ENCODE measurements at regions of chr6 and their contacts with region 1.

Region 1: DNA sequence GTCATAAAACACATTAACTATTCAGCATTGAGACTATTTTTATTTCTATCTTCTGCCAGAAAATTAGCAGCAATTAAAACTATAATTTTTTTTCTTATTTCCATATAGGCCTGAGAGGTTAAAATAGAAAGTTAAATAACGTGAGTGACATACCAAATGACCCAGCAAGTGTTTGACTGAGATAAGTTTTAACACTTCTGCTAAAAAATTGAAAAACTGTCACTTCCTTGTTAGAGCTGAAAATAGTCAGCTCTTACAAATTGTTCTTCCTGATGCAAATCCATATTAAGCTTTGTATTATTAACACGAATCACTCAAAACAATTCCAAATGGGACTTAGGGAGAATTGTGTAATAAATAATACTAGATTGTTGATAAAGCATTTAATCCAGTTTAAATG is 26.5 kb upstream of the STX11 start:
- DNase-seq: no peak
- H3K4me3 ChIP-seq: no peak overlapping the region
- H3K27ac ChIP-seq: no peak overlapping the region
- H3K4me1 ChIP-seq: no peaks in the 10 kb centered on the region
- H3K27me3 ChIP-seq: no peaks in the 10 kb centered on the region
- CTCF ChIP-seq: no peak
- POLR2A ChIP-seq: no peak

Region 2: DNA sequence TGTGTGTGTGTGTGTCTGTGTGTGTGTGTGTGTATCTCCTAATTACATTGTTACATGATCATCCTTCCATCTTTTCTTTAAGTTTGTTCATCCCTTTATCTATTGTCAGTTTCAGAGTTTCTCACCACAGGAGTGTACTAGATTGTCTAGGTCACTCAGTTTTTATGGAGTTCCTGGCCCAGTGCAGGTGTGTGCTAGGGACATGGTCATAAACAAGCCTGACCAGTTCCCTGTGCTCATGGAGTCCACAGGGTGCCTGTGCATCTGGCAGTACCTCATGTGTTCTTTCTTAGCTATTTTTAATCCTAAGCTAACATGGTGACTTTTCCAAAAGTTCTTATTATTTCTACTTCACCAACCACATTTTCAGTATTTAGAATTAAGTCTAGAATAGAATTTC is 402.2 kb before region 1 on chr6:
- intact Hi-C with region 1: no loop called
- DNase-seq: no peak
- H3K4me3 ChIP-seq: no peak overlapping the region
- H3K27ac ChIP-seq: no peak overlapping the region
- H3K4me1 ChIP-seq: no peaks in the 10 kb centered on the region
- H3K27me3 ChIP-seq: no peaks in the 10 kb centered on the region
- CTCF ChIP-seq: no peak
- POLR2A ChIP-seq: no peak

Region 3: DNA sequence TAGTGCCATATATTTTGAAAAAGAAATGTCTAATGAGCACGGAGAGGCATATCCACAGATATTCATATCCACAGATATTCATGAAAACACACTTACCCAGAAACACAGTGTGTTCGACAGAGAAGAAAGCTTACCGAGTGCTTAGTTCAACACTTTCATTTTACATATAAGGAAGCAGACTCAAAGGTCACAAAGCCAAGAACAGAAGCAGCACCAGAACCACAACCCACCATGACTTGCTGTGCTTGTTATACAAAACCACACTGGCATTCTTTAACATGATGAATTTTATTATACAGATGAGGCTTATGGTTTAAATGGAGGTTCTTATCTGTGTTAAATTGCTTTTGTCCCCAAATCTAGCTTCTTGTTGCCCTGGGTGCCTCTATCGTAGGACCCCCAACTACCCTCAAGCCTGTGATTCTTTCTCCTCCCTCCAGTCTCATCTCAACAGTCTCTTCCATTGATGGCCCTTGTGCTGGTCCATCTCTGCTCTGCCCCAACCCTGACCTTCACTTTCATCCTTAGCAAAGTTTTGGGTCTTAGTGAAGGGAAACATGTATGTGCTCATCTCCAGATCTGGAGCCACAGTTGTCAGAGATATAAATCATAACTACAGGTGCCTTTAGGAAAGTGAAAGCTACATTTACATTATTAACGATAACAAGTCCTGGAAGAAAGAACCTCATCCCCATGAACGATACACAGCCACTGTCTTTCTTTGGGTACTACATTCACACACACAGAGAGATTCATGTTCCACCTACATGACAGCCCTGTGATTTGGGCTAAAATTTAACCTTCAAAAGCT is 68.5 kb before region 1 on chr6:
- intact Hi-C with region 1: no loop called
- DNase-seq: no peak
- H3K4me3 ChIP-seq: no peak overlapping the region
- H3K27ac ChIP-seq: no peak overlapping the region
- H3K4me1 ChIP-seq: no peaks in the 10 kb centered on the region
- H3K27me3 ChIP-seq: no peaks in the 10 kb centered on the region
- CTCF ChIP-seq: no peak
- POLR2A ChIP-seq: no peak

Region 4: GRCh38 chr6:144075187-144075586 is 48.6 kb before region 1 on chr6:
- intact Hi-C with region 1: no loop called
- DNase-seq: no peak
- H3K4me3 ChIP-seq: no peak overlapping the region
- H3K27ac ChIP-seq: no peak overlapping the region
- H3K4me1 ChIP-seq: no peaks in the 10 kb centered on the region
- H3K27me3 ChIP-seq: no peaks in the 10 kb centered on the region
- CTCF ChIP-seq: no peak
- POLR2A ChIP-seq: no peak

Region 5: GRCh38 chr6:144190593-144190992 is 66.8 kb after region 1 on chr6:
- intact Hi-C with region 1: loop called (anchors 10 kb)
- DNase-seq: no peak
- H3K4me3 ChIP-seq: no peak overlapping the region
- H3K27ac ChIP-seq: no peak overlapping the region
- H3K4me1 ChIP-seq: no peaks in the 10 kb centered on the region
- H3K27me3 ChIP-seq: no peaks in the 10 kb centered on the region
- CTCF ChIP-seq: no peak
- POLR2A ChIP-seq: no peak

Region 6: GRCh38 chr6:145656128-145656527 is 1532.3 kb after region 1 on chr6:
- intact Hi-C with region 1: loop called (anchors 10 kb)
- DNase-seq: no peak
- H3K4me3 ChIP-seq: no peak overlapping the region
- H3K27ac ChIP-seq: no peak overlapping the region
- H3K4me1 ChIP-seq: no peaks in the 10 kb centered on the region
- H3K27me3 ChIP-seq: no peaks in the 10 kb centered on the region
- CTCF ChIP-seq: no peak
- POLR2A ChIP-seq: no peak